ENCODE measurements at regions of chr7 and their contacts with region 1.

Region 1: DNA sequence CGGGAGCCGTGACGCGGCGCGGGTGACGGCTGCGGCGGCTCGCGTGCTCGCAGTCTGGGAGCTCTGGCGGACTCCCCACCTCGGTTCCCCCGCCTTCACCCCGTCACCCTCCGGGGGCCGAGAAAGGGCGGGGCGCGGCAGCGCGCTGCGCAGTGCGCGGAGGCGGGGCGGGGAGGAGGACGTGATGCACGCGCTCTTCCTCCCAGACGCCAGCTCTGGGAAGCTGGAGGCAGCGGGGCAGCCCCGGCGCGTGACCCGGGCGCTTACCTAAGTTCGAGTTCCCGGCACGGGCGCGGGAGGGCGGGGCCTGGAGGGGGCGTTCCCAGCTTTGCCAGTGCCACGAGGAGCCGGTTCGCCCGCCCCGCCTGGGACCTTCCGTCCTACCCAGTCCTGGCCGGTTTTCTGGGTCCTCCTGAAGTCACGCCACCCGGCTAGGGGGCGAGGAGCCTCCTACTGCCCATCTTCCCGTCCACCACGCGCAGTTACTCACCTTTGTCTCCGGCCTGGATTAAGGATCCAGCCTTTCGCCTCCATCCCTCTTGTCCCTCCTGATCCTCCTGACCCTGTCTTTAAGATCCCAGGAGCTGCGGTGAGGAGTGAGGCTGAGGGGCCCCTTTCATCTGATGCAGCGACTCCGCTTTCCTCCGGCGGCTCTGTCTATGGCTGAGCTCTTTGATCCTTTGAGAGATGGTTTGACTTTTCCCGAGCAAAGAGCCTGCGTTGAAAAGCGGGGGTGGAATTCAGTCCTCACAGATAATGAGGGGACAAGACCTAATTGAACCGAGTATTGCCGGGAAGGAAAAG is 470 bp upstream of the NAMPT start:
- DNase-seq: peak; percentile 100
- ATAC-seq: peak; percentile 80
- H3K4me3 Mint-ChIP-seq: peak overlapping the region; percentile 94
- H3K27ac Mint-ChIP-seq: peak overlapping the region; percentile 99
- H3K4me1 Mint-ChIP-seq: peaks cover 45% of the 10 kb centered on the region
- H3K27me3 Mint-ChIP-seq: no peaks in the 10 kb centered on the region

Region 2: DNA sequence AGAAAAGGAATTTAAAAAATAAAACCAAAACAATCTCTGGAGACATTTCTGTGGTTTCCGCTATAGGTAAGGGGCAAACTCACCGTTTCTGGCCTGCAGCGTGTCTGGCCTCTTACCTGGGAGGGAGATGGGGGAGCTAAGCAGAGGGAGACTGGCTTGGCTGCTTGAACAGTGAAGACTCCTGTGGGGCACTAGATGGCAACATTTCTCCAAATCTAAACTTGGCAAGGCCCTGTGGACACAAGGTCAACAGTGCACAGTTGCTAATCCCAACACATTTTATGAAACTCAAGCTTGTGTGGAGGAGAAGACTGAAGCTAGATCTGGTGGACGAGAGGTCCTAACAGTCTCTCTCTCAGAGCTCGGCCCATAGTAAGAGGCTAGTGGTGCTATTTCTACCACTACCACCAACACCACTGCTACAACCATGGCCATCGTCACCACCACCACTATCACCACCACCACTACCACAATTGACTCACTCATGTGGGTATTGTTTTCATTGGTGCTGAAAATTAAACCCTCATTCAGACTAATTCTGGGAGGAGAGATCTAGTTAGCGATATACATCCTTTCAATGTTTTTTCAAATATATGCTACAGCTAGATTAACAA is 350.6 kb before region 1 on chr7:
- CTCF ChIA-PET with region 1: no interaction called
- POLR2A ChIA-PET with region 1: no interaction called
- intact Hi-C with region 1: no loop called
- DNase-seq: no peak
- ATAC-seq: no peak
- H3K4me3 Mint-ChIP-seq: no peak overlapping the region
- H3K27ac Mint-ChIP-seq: no peak overlapping the region
- H3K4me1 Mint-ChIP-seq: peaks cover 5% of the 10 kb centered on the region
- H3K27me3 Mint-ChIP-seq: no peaks in the 10 kb centered on the region

Region 3: DNA sequence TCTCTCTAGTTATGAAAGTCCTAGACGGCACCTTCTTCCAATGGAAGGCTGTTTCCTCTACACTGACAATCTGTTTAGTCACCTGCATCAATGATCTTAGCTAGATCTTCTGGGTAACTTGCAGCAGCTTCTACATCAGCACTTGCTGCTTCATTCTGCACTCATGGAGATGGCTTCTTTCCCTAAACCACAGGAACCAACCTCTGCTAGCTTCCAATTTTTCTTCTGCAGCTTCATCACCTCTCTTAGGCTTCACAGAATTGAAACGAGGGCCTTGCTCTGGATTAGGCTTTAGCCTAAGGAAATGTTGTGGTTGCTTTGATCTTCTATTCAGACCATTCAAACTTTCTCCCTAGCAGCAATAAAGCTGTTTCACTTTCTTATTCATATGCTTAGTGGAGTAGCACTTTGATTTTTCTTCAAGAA is 25.1 kb before region 1 on chr7:
- CTCF ChIA-PET with region 1: interaction called, 3 read pairs
- POLR2A ChIA-PET with region 1: interaction called, 15 read pairs
- intact Hi-C with region 1: no loop called
- DNase-seq: no peak
- ATAC-seq: peak; percentile 21
- H3K4me3 Mint-ChIP-seq: no peak overlapping the region
- H3K27ac Mint-ChIP-seq: peak overlapping the region; percentile 83
- H3K4me1 Mint-ChIP-seq: peaks cover 81% of the 10 kb centered on the region
- H3K27me3 Mint-ChIP-seq: no peaks in the 10 kb centered on the region

Region 4: GRCh38 chr7:106346678-106347217 is 61.5 kb after region 1 on chr7:
- CTCF ChIA-PET with region 1: interaction called, 12 read pairs
- POLR2A ChIA-PET with region 1: interaction called, 69 read pairs
- intact Hi-C with region 1: loop called (anchors 1 kb)
- DNase-seq: peak; percentile 65
- ATAC-seq: peak; percentile 73
- H3K4me3 Mint-ChIP-seq: peak overlapping the region; percentile 66
- H3K27ac Mint-ChIP-seq: peak overlapping the region; percentile 100
- H3K4me1 Mint-ChIP-seq: peaks cover 54% of the 10 kb centered on the region
- H3K27me3 Mint-ChIP-seq: peaks cover 12% of the 10 kb centered on the region

Region 5: DNA sequence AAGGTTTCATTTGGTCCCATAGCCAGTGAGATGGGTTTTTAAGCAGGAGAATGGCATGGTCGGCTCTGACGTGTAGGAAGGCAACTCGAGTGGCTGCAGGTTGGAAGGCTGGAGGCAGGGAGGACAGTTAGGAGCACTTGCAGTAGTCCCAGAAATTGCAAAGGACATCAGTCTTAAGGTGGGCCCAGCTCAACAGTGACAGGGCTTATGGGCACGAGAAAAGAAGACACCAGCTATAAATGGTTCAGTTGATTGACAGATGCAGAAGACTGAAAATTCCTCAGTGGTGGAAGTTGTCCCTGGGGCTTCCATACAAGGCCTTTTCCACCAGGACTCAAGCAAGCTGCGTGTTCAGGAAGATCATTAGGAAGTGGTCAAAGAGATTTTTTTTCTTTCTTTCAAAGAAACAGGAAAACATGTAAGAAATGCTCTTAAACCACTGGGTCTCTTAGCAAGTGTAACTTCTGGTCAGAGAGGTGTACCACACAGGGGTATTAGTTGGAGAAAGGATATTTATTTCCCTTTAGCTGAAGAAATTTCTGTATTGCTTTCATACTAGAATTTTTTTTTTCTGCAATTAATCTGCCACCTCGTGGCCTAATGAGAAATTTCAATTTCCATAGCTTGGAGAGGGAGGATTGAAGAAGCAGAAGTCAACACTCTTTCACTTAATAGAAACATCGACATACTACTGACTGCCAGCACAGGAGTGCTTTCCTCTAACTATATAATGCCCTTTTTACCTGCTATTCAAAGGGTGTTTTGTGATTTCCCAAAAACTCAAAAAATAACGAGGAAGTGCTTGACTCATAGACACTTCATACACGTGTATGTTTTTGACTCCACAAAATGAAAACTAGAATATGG is 177.0 kb after region 1 on chr7:
- CTCF ChIA-PET with region 1: interaction called, 6 read pairs
- POLR2A ChIA-PET with region 1: interaction called, 18 read pairs
- intact Hi-C with region 1: loop called (anchors 2 kb)
- DNase-seq: no peak
- ATAC-seq: peak; percentile 69
- H3K4me3 Mint-ChIP-seq: peak overlapping the region; percentile 8
- H3K27ac Mint-ChIP-seq: peak overlapping the region; percentile 75
- H3K4me1 Mint-ChIP-seq: peaks cover 36% of the 10 kb centered on the region
- H3K27me3 Mint-ChIP-seq: no peaks in the 10 kb centered on the region

Region 6: DNA sequence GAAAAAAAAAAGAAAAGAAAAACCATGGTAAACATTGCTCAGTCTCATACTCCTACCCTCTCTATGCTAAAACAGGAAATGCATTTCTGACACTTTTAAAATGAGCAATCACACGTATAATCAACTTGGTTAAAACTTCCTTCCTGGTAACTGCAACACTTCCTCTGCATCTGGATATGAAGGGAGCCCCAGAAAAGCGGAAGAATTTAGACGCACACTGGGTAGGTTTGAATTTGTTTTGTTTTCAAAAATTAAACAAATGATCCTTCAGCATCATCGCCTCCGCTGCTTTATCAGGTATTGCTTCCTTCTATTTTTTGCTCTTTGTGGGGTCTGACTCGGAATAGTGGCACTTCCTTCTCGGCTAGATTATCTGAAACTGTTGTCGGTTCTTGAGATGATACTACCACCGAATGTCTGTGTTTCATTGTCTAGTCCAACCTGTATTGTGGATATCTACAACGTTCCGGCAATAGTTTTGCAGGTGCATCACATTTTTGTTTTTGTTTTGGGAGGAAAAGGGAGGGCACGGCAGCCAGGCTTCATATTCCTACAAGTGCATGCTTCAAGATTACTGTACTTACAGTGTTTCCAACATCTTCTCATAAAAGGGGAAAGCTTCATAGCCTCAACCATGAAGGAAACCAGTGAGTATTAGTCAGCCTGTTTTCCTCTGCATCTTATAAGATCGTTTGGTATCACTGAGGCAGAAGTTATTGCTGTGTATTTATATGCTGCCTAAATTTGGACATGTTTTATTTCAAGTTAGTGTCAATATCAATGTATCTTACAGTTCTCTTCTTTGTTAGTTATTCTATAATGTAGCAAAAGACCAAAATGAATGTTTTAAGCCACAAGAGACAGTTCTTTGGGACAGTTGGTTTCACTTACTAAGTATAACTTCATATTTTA is 580.1 kb after region 1 on chr7 and contains the start of gene PIK3CG:
- CTCF ChIA-PET with region 1: no interaction called
- POLR2A ChIA-PET with region 1: no interaction called
- intact Hi-C with region 1: loop called in 1 of 2 experiments (anchors 10 kb)
- DNase-seq: no peak
- ATAC-seq: peak; percentile 79
- H3K4me3 Mint-ChIP-seq: peak within 1 kb of the TSS; percentile 83
- H3K27ac Mint-ChIP-seq: peak within 1 kb of the TSS; percentile 92
- H3K4me1 Mint-ChIP-seq: peaks cover 75% of the 10 kb centered on the region
- H3K27me3 Mint-ChIP-seq: no peaks in the 10 kb centered on the region
- total RNA-seq, gene PIK3CG: 9.9 to 14.3 TPM

Measured in activated CD4-positive, alpha-beta T cell treated with anti-CD3 and anti-CD28 coated beads for 36 hours (primary cell).